Common myeloid progenitor, CD34-positive (primary cell): ENCODE measurements at regions of chr20 and their contacts with region 1.

Region 1: DNA sequence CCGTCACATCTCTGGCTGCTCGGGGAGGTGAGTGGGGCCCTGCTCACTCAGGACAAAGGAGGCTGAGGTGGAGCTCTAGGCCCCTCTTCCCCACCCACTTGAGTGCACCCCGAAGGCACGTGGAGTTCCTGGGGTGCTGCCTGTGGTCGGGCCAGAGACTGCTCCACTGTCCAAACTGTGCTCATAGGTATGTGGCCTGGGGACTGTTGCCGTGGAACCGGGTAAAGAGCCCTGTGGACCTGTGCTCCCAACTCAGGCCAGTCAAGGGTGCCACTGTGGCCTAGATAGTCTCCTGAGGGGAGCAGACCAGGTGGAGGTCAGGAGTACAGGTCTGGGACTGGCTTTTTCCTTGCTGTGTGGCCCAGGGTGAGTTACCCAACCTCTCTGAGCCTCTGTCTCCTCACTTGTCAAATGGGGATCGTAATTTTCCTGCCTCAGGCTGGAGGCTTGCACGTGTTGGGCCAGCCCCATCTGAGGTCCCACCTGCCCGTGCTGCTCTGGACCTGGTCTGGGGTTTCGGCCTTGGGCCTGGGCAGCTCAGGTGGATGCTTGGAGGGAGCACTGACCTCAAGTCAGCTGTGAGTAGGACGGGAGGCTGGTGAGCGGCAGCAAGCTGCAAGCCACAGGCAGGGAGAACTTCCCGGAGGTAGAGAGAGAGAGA is 12.4 kb upstream of the NPBWR2 start:
- DNase-seq: no peak
- H3K4me3 ChIP-seq: peak overlapping the region in 5 of 7 experiments; percentile 13 to 55 (median 43)
- H3K27ac ChIP-seq: no peak overlapping the region
- H3K4me1 ChIP-seq: peaks cover 0 to 14% (median 13%) of the 10 kb centered on the region in 4 experiments
- H3K27me3 ChIP-seq: peaks cover 0 to 2% (median 0%) of the 10 kb centered on the region in 5 experiments

Region 2: GRCh38 chr20:64010711-64011237 is 109.0 kb before region 1 on chr20:
- CTCF ChIA-PET with region 1: no interaction called
- POLR2A ChIA-PET with region 1: no interaction called
- DNase-seq: no peak
- H3K4me3 ChIP-seq: no peak overlapping the region
- H3K27ac ChIP-seq: no peak overlapping the region
- H3K4me1 ChIP-seq: peaks cover 0 to 7% (median 7%) of the 10 kb centered on the region in 4 experiments
- H3K27me3 ChIP-seq: no peaks in the 10 kb centered on the region

Region 3: GRCh38 chr20:64027981-64028685 is 91.7 kb before region 1 on chr20:
- CTCF ChIA-PET with region 1: no interaction called
- POLR2A ChIA-PET with region 1: no interaction called
- DNase-seq: no peak
- H3K4me3 ChIP-seq: no peak overlapping the region
- H3K27ac ChIP-seq: no peak overlapping the region
- H3K4me1 ChIP-seq: no peaks in the 10 kb centered on the region
- H3K27me3 ChIP-seq: no peaks in the 10 kb centered on the region

Region 4: GRCh38 chr20:64038565-64039292 is 81.1 kb before region 1 on chr20:
- CTCF ChIA-PET with region 1: interaction called, 21 read pairs
- POLR2A ChIA-PET with region 1: interaction called, 4 read pairs
- DNase-seq: peak; percentile 60 to 80 (median 72)
- H3K4me3 ChIP-seq: peak overlapping the region; percentile 21 to 78 (median 49)
- H3K27ac ChIP-seq: no peak overlapping the region
- H3K4me1 ChIP-seq: peaks cover 10 to 69% (median 63%) of the 10 kb centered on the region in 4 experiments
- H3K27me3 ChIP-seq: peaks cover 0 to 8% (median 2%) of the 10 kb centered on the region in 5 experiments

Region 5: GRCh38 chr20:64079273-64080012 is 40.4 kb before region 1 on chr20 and contains the start of gene RGS19:
- CTCF ChIA-PET with region 1: interaction called, 178 read pairs
- POLR2A ChIA-PET with region 1: no interaction called
- DNase-seq: peak; percentile 86 to 95 (median 95)
- H3K4me3 ChIP-seq: peak within 1 kb of the TSS; percentile 58 to 92 (median 79)
- H3K27ac ChIP-seq: peak within 1 kb of the TSS; percentile 33 to 81
- H3K4me1 ChIP-seq: peaks cover 0 to 90% (median 83%) of the 10 kb centered on the region in 4 experiments
- H3K27me3 ChIP-seq: no peaks in the 10 kb centered on the region

Region 6: GRCh38 chr20:64101731-64102621 is 17.8 kb before region 1 on chr20:
- CTCF ChIA-PET with region 1: interaction called, 67 read pairs
- POLR2A ChIA-PET with region 1: no interaction called
- DNase-seq: peak in 2 of 3 donors; percentile 81 to 83
- H3K4me3 ChIP-seq: peak overlapping the region; percentile 6 to 81 (median 67)
- H3K27ac ChIP-seq: no peak overlapping the region
- H3K4me1 ChIP-seq: peaks cover 0 to 17% (median 14%) of the 10 kb centered on the region in 4 experiments
- H3K27me3 ChIP-seq: peaks cover 0 to 3% (median 0%) of the 10 kb centered on the region in 5 experiments